ENCODE measurements at regions of chr12 and their contacts with region 1.

Region 1: DNA sequence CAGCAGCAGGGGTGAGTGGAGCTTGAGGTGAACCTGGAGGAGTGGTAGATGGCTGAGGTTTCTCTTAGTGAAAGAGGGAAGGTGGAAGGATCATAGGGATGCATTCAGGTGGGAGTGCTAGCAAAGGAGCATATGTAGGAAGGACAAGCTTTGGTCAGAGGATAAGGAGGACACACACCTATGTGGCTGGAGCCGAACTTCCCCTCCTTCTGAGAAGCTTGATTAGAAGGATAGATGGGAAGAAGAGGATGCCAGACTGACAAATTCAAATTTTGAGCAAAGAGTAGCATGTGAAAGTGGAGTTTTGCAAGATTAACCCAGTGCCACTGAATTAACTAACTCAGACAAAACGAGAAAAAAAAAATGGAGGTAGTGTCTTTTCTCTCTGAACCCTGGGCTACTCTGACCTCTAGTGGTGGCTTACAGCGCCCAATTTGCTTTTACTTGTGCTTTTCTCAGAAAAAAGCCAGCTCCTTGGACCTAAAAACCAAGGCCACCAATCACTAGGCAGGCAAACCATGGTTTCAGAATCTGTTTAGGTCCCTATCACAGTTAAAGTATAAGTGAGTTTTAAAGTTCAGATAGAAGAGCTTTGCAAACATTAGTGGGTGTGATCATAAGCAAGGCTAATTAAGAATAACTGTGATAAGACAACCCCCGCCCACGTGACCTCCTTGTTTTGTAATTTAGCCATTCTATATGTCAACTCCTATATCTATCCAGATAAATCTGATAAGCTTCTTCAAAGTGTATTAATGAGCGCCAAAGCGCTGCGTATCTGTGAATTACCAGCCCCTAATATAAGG is 15.5 kb downstream of the EMP1 start:
- DNase-seq: peak; percentile 82
- ATAC-seq: peak; percentile 65
- H3K4me3 ChIP-seq: no peak overlapping the region
- H3K4me3 Mint-ChIP-seq: no peak overlapping the region
- H3K27ac ChIP-seq: no peak overlapping the region
- H3K27ac Mint-ChIP-seq: no peak overlapping the region
- H3K4me1 ChIP-seq: peaks cover 3 to 4% of the 10 kb centered on the region in 2 donors
- H3K4me1 Mint-ChIP-seq: peaks cover 5% of the 10 kb centered on the region
- H3K27me3 ChIP-seq: peaks cover 0 to 6% (median 3%) of the 10 kb centered on the region in 4 experiments
- H3K27me3 Mint-ChIP-seq: peaks cover 33% of the 10 kb centered on the region
- CTCF ChIP-seq: peak; percentile 87

Region 2: GRCh38 chr12:12786716-12787601 is 425.1 kb before region 1 on chr12:
- CTCF ChIA-PET with region 1: interaction called, 49 read pairs
- POLR2A ChIA-PET with region 1: no interaction called
- intact Hi-C with region 1: loop called (anchors 2 kb)
- DNase-seq: peak; percentile 85
- ATAC-seq: peak; percentile 92
- H3K4me3 ChIP-seq: peak overlapping the region; percentile 54 to 88 (median 77)
- H3K4me3 Mint-ChIP-seq: peak overlapping the region; percentile 90
- H3K27ac ChIP-seq: peak overlapping the region; percentile 77 to 82
- H3K27ac Mint-ChIP-seq: peak overlapping the region; percentile 92
- H3K4me1 ChIP-seq: peaks cover 10 to 24% of the 10 kb centered on the region in 2 donors
- H3K4me1 Mint-ChIP-seq: peaks cover 20% of the 10 kb centered on the region
- H3K27me3 ChIP-seq: no peaks in the 10 kb centered on the region
- H3K27me3 Mint-ChIP-seq: no peaks in the 10 kb centered on the region
- CTCF ChIP-seq: peak; percentile 14

Region 3: DNA sequence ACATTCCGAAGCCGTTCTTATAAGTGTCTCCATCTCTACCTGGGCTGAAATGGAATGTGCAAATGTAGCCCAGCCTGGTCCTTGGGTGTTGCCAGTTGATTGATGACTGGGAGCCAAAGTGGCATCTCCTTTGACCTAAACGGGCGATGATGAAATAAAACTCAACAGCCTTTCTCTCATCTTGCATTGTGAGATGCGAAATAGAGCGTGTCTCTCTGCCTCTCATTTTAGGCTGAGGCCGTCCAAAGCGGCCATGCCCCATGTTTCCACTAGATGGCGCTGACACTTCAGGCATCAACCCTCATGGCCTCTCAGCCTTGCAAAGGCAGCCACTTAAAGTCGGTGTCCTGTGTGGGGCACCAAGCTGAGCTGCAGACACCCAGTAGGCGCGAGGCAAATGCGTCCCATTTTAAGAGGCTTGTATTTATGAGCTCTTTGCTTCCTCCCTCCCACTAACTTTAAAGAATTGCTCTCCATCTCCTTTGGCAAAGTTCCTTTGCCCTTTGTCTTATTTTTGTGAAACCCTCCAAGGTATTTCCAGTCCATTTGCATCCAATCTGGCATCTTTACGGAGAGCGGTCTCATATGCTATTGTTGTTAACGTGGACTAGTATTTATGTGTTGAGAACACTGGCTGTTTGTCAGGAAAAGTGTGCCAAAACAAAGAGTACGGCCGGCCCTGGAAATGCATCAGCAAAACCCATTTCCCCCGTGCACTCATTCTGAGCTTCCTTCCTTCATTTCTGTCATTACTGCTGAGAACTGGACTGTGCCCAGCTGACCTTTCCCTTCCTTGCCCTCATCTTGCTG is 295.7 kb before region 1 on chr12:
- CTCF ChIA-PET with region 1: interaction called, 275 read pairs
- POLR2A ChIA-PET with region 1: no interaction called
- intact Hi-C with region 1: loop called (anchors 1 kb)
- DNase-seq: peak; percentile 88
- ATAC-seq: peak; percentile 97
- H3K4me3 ChIP-seq: peak overlapping the region in 1 of 5 experiments; percentile 9
- H3K4me3 Mint-ChIP-seq: no peak overlapping the region
- H3K27ac ChIP-seq: no peak overlapping the region
- H3K27ac Mint-ChIP-seq: no peak overlapping the region
- H3K4me1 ChIP-seq: peaks cover 5 to 9% of the 10 kb centered on the region in 2 donors
- H3K4me1 Mint-ChIP-seq: peaks cover 6% of the 10 kb centered on the region
- H3K27me3 ChIP-seq: peaks cover 0 to 16% (median 6%) of the 10 kb centered on the region in 4 experiments
- H3K27me3 Mint-ChIP-seq: peaks cover 17% of the 10 kb centered on the region
- CTCF ChIP-seq: peak; percentile 94

Region 4: GRCh38 chr12:12999959-13000615 is 212.0 kb before region 1 on chr12 and contains the start of gene HEBP1:
- CTCF ChIA-PET with region 1: interaction called, 12 read pairs
- POLR2A ChIA-PET with region 1: no interaction called
- intact Hi-C with region 1: loop called (anchors 1 kb)
- DNase-seq: peak; percentile 96
- ATAC-seq: peak; percentile 89
- H3K4me3 ChIP-seq: peak within 1 kb of the TSS; percentile 63 to 92 (median 81)
- H3K4me3 Mint-ChIP-seq: peak within 1 kb of the TSS; percentile 90
- H3K27ac ChIP-seq: peak within 1 kb of the TSS; percentile 61 to 63
- H3K27ac Mint-ChIP-seq: peak within 1 kb of the TSS; percentile 80
- H3K4me1 ChIP-seq: peaks cover 11 to 20% of the 10 kb centered on the region in 2 donors
- H3K4me1 Mint-ChIP-seq: peaks cover 29% of the 10 kb centered on the region
- H3K27me3 ChIP-seq: peaks cover 0 to 3% (median 0%) of the 10 kb centered on the region in 4 experiments
- H3K27me3 Mint-ChIP-seq: no peaks in the 10 kb centered on the region
- CTCF ChIP-seq: no peak
- total RNA-seq, gene HEBP1: 11.2 and 14.5 TPM in 2 replicates

Region 5: GRCh38 chr12:13044002-13044905 is 167.8 kb before region 1 on chr12 and contains the start of gene FAM234B:
- CTCF ChIA-PET with region 1: interaction called, 34 read pairs
- POLR2A ChIA-PET with region 1: no interaction called
- intact Hi-C with region 1: no loop called
- DNase-seq: peak; percentile 76
- ATAC-seq: peak; percentile 96
- H3K4me3 ChIP-seq: peak within 1 kb of the TSS; percentile 51 to 98 (median 88)
- H3K4me3 Mint-ChIP-seq: peak within 1 kb of the TSS; percentile 90
- H3K27ac ChIP-seq: peak within 1 kb of the TSS in 1 of 2 donors; percentile 77
- H3K27ac Mint-ChIP-seq: peak within 1 kb of the TSS; percentile 53
- H3K4me1 ChIP-seq: peaks cover 22% of the 10 kb centered on the region in 2 donors
- H3K4me1 Mint-ChIP-seq: peaks cover 25% of the 10 kb centered on the region
- H3K27me3 ChIP-seq: no peaks in the 10 kb centered on the region
- H3K27me3 Mint-ChIP-seq: no peaks in the 10 kb centered on the region
- CTCF ChIP-seq: no peak
- total RNA-seq, gene FAM234B: 7.7 and 8.2 TPM in 2 replicates

Region 6: GRCh38 chr12:13196130-13196921 is 15.7 kb before region 1 on chr12 and contains the start of gene EMP1:
- CTCF ChIA-PET with region 1: interaction called, 21 read pairs
- POLR2A ChIA-PET with region 1: no interaction called
- intact Hi-C with region 1: no loop called
- DNase-seq: peak; percentile 68
- ATAC-seq: peak; percentile 90
- H3K4me3 ChIP-seq: peak within 1 kb of the TSS in 4 of 5 experiments; percentile 3 to 61 (median 44)
- H3K4me3 Mint-ChIP-seq: peak within 1 kb of the TSS; percentile 80
- H3K27ac ChIP-seq: peak within 1 kb of the TSS in 1 of 2 donors; percentile 13
- H3K27ac Mint-ChIP-seq: peak within 1 kb of the TSS; percentile 65
- H3K4me1 ChIP-seq: peaks cover 15 to 19% of the 10 kb centered on the region in 2 donors
- H3K4me1 Mint-ChIP-seq: peaks cover 30% of the 10 kb centered on the region
- H3K27me3 ChIP-seq: peaks cover 0 to 16% (median 3%) of the 10 kb centered on the region in 4 experiments
- H3K27me3 Mint-ChIP-seq: peaks cover 55% of the 10 kb centered on the region
- CTCF ChIP-seq: no peak
- total RNA-seq, gene EMP1: 0.64 and 0.83 TPM in 2 replicates

Region 7: GRCh38 chr12:13233830-13234641 is 22.0 kb after region 1 on chr12:
- CTCF ChIA-PET with region 1: interaction called, 11 read pairs
- POLR2A ChIA-PET with region 1: no interaction called
- intact Hi-C with region 1: no loop called
- DNase-seq: peak; percentile 47
- ATAC-seq: peak; percentile 47
- H3K4me3 ChIP-seq: no peak overlapping the region
- H3K4me3 Mint-ChIP-seq: no peak overlapping the region
- H3K27ac ChIP-seq: no peak overlapping the region
- H3K27ac Mint-ChIP-seq: no peak overlapping the region
- H3K4me1 ChIP-seq: no peaks in the 10 kb centered on the region
- H3K4me1 Mint-ChIP-seq: no peaks in the 10 kb centered on the region
- H3K27me3 ChIP-seq: no peaks in the 10 kb centered on the region
- H3K27me3 Mint-ChIP-seq: peaks cover 13% of the 10 kb centered on the region
- CTCF ChIP-seq: peak; percentile 75

Region 8: DNA sequence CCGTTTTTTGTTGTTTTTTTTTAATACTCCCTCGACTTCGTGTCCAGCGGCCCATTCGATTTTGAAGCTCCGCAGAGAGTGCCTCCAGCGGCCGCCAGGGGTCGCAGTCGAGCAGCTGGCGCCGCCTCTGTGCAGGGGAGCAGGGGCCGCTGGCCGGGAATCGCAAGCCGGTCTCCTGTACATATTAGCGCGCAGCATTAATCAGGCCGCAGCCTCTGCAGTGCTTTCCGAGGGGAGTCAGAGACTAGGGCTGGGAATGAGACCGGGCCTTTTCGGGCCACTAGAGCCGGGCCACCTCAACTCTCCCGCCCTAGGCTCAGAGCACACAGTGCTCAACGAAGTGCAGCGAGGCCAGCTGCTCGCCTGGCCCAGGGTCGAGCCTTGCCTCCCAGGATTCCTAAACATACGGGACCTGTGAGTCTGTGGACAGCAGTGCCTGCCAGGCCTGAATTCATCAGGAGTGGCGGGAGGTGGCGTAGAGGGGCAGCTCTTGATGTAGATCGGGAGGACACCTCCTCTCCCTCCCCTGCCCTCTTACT is 66.3 kb after region 1 on chr12:
- CTCF ChIA-PET with region 1: no interaction called
- POLR2A ChIA-PET with region 1: no interaction called
- intact Hi-C with region 1: no loop called
- DNase-seq: peak; percentile 65
- ATAC-seq: peak; percentile 60
- H3K4me3 ChIP-seq: no peak overlapping the region
- H3K4me3 Mint-ChIP-seq: no peak overlapping the region
- H3K27ac ChIP-seq: no peak overlapping the region
- H3K27ac Mint-ChIP-seq: no peak overlapping the region
- H3K4me1 ChIP-seq: peaks cover 4 to 5% of the 10 kb centered on the region in 2 donors
- H3K4me1 Mint-ChIP-seq: peaks cover 6% of the 10 kb centered on the region
- H3K27me3 ChIP-seq: peaks cover 0 to 38% (median 10%) of the 10 kb centered on the region in 4 experiments
- H3K27me3 Mint-ChIP-seq: peaks cover 42% of the 10 kb centered on the region
- CTCF ChIP-seq: peak; percentile 97

Measured in B cell (primary cell).